Psoas muscle (tissue), 8 donors: ENCODE measurements at regions of chr1 and their contacts with region 1.

Region 1: GRCh38 chr1:9428601-9429341 is 110.5 kb upstream of the SLC25A33 start:
- DNase-seq: peak; percentile 98 to 99
- ATAC-seq: peak; percentile 97 to 99 (median 97)
- H3K4me3 ChIP-seq: peak overlapping the region; percentile 76
- H3K27ac ChIP-seq: peak overlapping the region; percentile 82
- H3K4me1 ChIP-seq: peaks cover 5% of the 10 kb centered on the region
- H3K27me3 ChIP-seq: no peaks in the 10 kb centered on the region
- CTCF ChIP-seq: no peak

Region 2: GRCh38 chr1:9388335-9389180 is 40.2 kb before region 1 on chr1:
- intact Hi-C with region 1: loop called in 1 of 2 experiments (anchors 5 kb)
- DNase-seq: peak; percentile 52 to 82
- ATAC-seq: peak; percentile 52 to 65 (median 55)
- H3K4me3 ChIP-seq: no peak overlapping the region
- H3K27ac ChIP-seq: peak overlapping the region; percentile 59
- H3K4me1 ChIP-seq: peaks cover 28% of the 10 kb centered on the region
- H3K27me3 ChIP-seq: no peaks in the 10 kb centered on the region
- CTCF ChIP-seq: no peak

Region 3: DNA sequence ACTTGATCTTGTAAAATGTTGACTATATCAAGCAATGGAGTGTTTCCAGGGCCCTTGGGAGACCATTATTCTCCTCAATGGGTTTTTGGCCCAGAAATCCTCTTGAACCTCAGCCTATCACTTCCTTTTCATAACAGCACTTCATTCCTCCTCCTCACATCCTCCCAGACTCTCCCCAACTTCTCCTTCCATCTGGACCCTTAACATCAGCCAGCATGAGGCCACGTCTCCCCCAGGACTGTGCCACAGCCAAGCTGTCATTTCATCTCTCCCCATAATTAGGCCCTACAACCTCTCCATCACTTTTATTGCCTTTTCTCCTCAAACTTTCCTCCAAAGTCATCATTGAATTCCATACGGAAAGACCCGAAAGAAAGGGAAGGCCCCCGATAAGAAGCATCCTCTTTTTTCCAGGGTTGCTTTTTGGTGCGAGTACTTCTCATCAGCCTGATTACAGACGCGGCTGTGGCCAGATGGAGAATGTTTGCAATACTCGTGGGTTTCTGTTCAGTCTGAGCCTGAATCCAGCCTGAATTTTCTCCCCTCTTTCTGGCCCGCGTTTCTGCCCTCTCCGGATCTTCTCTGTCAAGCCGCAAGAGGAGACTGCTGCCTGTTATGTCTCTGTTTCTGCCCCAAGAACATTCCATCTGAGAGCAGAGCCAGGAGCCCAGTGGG is 57.8 kb after region 1 on chr1:
- intact Hi-C with region 1: no loop called
- DNase-seq: no peak
- ATAC-seq: no peak
- H3K4me3 ChIP-seq: no peak overlapping the region
- H3K27ac ChIP-seq: no peak overlapping the region
- H3K4me1 ChIP-seq: no peaks in the 10 kb centered on the region
- H3K27me3 ChIP-seq: no peaks in the 10 kb centered on the region
- CTCF ChIP-seq: no peak